ENCODE measurements at regions of chr15 and their contacts with region 1.

Region 1: GRCh38 chr15:64209680-64210334 is 47.0 kb upstream of the PPIB start:
- DNase-seq: no peak
- H3K4me3 ChIP-seq: no peak overlapping the region
- H3K27ac ChIP-seq: no peak overlapping the region
- H3K4me1 ChIP-seq: no peaks in the 10 kb centered on the region
- H3K27me3 ChIP-seq: no peaks in the 10 kb centered on the region
- CTCF ChIP-seq: no peak

Region 2: GRCh38 chr15:64046347-64047153 is 163.3 kb before region 1 on chr15 and contains the start of gene DAPK2:
- intact Hi-C with region 1: no loop called
- DNase-seq: peak; percentile 78
- H3K4me3 ChIP-seq: peak within 1 kb of the TSS; percentile 66
- H3K27ac ChIP-seq: no peak within 1 kb of the TSS
- H3K4me1 ChIP-seq: peaks cover 12% of the 10 kb centered on the region
- H3K27me3 ChIP-seq: no peaks in the 10 kb centered on the region
- CTCF ChIP-seq: peak; percentile 78
- total RNA-seq, gene DAPK2: 23.7 to 26.5 TPM

Region 3: DNA sequence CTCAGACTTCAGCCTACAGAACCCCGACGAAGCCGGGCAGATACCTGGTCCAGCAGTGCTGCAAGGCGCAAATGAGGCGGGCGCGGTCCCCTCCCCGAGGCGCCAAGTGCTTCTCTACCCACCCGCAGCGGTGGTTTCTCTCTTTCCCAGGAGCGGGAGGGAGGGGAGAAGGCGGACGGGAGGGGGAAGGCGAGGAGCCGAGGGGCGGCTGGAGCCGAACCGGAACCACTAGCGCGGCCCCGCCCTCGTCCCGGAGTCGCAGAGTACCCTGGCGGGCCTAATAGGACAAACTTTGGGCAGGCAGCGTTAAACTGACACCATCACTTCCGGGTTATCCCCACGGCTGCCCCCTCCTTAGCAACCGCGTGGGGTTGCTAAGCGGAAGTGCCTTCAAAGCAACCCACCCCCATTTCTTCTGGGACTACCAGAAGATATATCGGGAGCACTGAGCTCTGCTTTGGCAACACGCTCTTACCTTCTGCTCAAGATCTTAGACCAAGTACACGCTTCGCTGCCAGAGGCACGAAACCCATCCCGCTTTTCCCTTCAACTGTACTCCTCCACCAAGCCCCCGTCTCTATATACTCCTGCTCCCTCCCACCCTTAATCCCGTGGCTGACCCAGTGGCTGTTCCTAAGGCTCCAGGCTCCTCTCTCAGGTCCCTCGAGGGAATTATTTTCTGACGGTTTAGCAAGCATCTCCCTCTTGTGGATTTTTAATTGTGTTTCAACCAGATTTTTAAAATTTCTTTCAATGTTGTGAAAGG is 146.3 kb after region 1 on chr15 and contains the start of gene CSNK1G1:
- intact Hi-C with region 1: loop called (anchors 5 kb)
- DNase-seq: peak; percentile 94
- H3K4me3 ChIP-seq: peak within 1 kb of the TSS; percentile 88
- H3K27ac ChIP-seq: peak within 1 kb of the TSS; percentile 62
- H3K4me1 ChIP-seq: no peaks in the 10 kb centered on the region
- H3K27me3 ChIP-seq: no peaks in the 10 kb centered on the region
- CTCF ChIP-seq: peak; percentile 14
- total RNA-seq, gene CSNK1G1: 17.0 to 18.5 TPM

Measured in colonic mucosa (tissue), 4 donors.